IMR-90 (cell line): ENCODE measurements at regions of chr9 and their contacts with region 1.

Region 1: GRCh38 chr9:4397917-4398316 is 92.4 kb upstream of the SLC1A1 start:
- DNase-seq: peak; percentile 49
- ATAC-seq: no peak
- H3K4me3 ChIP-seq: no peak overlapping the region
- H3K27ac ChIP-seq: no peak overlapping the region
- H3K4me1 ChIP-seq: peaks cover 4% of the 10 kb centered on the region
- H3K27me3 ChIP-seq: peaks cover 4% of the 10 kb centered on the region
- CTCF ChIP-seq: no peak
- POLR2A ChIP-seq: no peak
- RAD21 ChIP-seq: no peak

Region 2: DNA sequence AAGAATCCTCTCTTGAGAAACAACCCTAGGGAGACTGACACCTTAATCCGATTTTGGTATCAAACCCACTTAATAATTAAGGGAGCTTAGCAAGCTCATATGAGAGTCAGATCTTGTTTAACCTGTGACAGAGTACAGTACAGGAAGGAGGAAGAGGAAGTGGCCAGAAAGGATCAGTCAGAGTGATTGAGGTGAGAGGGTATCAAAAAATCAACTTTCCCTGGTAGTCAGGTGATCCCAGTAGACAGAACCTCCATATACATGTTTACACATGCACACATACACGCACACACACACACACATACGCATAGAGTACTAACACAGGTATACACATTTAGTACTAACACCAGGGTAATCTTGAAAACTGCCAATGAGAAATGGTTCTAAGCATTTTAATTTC is 154.8 kb before region 1 on chr9:
- CTCF ChIA-PET with region 1: no interaction called
- POLR2A ChIA-PET with region 1: no interaction called
- dilution Hi-C with region 1: no loop called
- in situ Hi-C with region 1: no loop called
- intact Hi-C with region 1: no loop called
- DNase-seq: no peak
- ATAC-seq: no peak
- H3K4me3 ChIP-seq: no peak overlapping the region
- H3K27ac ChIP-seq: no peak overlapping the region
- H3K4me1 ChIP-seq: peaks cover 2% of the 10 kb centered on the region; the same call in 1 of the 2 replicates
- H3K27me3 ChIP-seq: no peaks in the 10 kb centered on the region
- CTCF ChIP-seq: no peak
- POLR2A ChIP-seq: no peak
- RAD21 ChIP-seq: no peak

Region 3: GRCh38 chr9:4555251-4555650 is 157.3 kb after region 1 on chr9:
- CTCF ChIA-PET with region 1: no interaction called
- POLR2A ChIA-PET with region 1: no interaction called
- dilution Hi-C with region 1: no loop called
- in situ Hi-C with region 1: no loop called
- intact Hi-C with region 1: loop called (anchors 10 kb)
- DNase-seq: peak; percentile 17
- ATAC-seq: no peak
- H3K4me3 ChIP-seq: no peak overlapping the region
- H3K27ac ChIP-seq: no peak overlapping the region
- H3K4me1 ChIP-seq: no peaks in the 10 kb centered on the region
- H3K27me3 ChIP-seq: no peaks in the 10 kb centered on the region
- CTCF ChIP-seq: no peak
- POLR2A ChIP-seq: no peak
- RAD21 ChIP-seq: no peak

Region 4: GRCh38 chr9:4662108-4662988 is 264.4 kb after region 1 on chr9 and contains the start of gene PLPP6:
- CTCF ChIA-PET with region 1: no interaction called
- POLR2A ChIA-PET with region 1: no interaction called
- dilution Hi-C with region 1: no loop called
- in situ Hi-C with region 1: loop called (anchors 10 kb)
- intact Hi-C with region 1: no loop called
- DNase-seq: peak; percentile 75
- ATAC-seq: peak; percentile 88
- H3K4me3 ChIP-seq: peak within 1 kb of the TSS; percentile 91
- H3K27ac ChIP-seq: peak within 1 kb of the TSS; percentile 85
- H3K4me1 ChIP-seq: peaks cover 9% of the 10 kb centered on the region
- H3K27me3 ChIP-seq: no peaks in the 10 kb centered on the region
- CTCF ChIP-seq: peak; percentile 54
- POLR2A ChIP-seq: peak; percentile 56; the same call in 1 of the 2 replicates
- RAD21 ChIP-seq: peak; percentile 42
- total RNA-seq, gene PLPP6: 3.3 and 3.4 TPM in 2 replicates